ENCODE measurements at regions of chr12 and their contacts with region 1.

Region 1: DNA sequence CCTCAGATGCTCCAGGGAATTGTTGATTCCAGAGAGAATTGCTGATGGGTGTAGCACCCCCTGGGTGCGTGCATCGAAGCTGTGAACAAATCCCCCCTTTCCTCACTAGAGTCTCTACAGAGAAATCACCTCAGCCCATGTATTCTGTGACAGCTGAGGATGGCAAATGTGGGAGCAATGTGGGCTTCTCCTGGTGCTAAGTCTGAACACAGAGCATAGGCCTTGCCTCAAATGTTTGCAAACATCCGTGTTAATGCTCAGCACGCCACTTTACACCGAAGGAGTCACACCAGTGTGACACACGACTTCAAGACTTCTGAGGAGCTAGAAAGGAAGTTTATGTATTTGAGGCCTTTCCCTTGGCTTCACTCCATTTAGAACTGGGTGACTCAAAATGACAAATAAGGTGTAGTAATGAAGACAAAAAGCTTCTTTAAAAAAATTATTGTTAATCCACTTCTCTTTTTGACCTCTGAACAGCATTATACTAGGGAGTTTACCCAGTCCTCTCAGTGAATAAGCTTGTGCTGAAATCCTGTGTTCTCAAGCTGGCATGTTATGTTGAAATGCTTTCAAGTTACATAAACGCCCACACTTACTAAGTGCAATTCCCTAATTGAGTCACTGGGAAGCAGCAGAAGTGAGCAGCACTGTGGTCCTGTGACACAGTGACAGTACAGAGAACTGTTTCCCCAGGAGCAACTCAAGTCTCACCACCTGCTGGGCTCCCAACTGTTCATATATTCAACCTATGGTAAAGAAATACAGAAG is 92.9 kb downstream of the FAR2 start:
- DNase-seq: peak; percentile 54
- H3K4me3 Mint-ChIP-seq: no peak overlapping the region
- H3K27ac Mint-ChIP-seq: no peak overlapping the region
- H3K4me1 Mint-ChIP-seq: peaks cover 16% of the 10 kb centered on the region
- H3K27me3 Mint-ChIP-seq: no peaks in the 10 kb centered on the region

Region 2: GRCh38 chr12:28177461-28177860 is 1064.5 kb before region 1 on chr12:
- CTCF ChIA-PET with region 1: no interaction called
- intact Hi-C with region 1: no loop called
- DNase-seq: no peak
- H3K4me3 Mint-ChIP-seq: no peak overlapping the region
- H3K27ac Mint-ChIP-seq: no peak overlapping the region
- H3K4me1 Mint-ChIP-seq: no peaks in the 10 kb centered on the region
- H3K27me3 Mint-ChIP-seq: no peaks in the 10 kb centered on the region

Region 3: GRCh38 chr12:29088611-29089219 is 153.3 kb before region 1 on chr12:
- CTCF ChIA-PET with region 1: no interaction called
- intact Hi-C with region 1: loop called (anchors 5 kb)
- DNase-seq: no peak
- H3K4me3 Mint-ChIP-seq: no peak overlapping the region
- H3K27ac Mint-ChIP-seq: no peak overlapping the region
- H3K4me1 Mint-ChIP-seq: no peaks in the 10 kb centered on the region
- H3K27me3 Mint-ChIP-seq: peaks cover 7% of the 10 kb centered on the region

Region 4: DNA sequence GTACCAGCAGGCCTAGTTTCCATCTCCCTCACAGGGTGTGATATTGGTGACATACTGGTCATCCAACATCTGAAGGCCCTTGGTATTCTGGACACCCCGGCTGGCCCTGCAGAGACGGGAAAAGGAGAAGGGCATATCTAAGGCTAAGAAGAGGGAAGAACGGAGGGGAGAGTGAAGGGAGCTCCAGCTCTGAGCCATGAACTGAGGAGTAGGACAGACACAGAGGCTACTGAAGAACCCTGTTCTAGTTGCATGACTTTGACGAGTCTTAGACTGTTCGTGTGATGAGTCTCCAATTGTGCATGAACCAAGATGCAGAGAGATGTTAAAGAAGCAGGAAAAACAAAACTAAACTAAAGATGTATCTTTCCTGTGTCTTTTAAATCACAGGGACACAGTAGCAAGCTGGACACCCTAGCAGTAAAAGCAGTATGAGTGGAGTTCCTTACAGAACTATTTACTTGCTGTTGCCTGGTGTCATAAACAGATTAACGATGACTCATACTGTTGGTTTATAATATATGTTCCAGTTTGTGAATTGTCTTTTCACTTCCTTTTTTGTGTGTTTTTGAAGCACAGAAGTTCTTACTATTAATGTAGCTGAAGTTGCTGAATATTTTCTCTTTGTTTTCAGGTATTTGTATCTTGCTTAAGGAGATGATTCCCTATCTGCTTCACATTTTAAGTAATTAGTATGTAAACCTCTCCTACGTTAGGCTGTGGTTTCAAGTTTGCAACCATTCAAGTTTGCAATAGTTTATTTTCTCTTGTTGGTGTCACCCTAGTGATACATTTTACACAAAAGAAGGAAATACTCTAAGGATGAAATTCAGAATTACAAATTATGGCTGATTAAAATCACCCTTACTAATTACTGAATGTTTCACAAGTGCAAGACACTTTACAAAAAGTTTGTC is 77.3 kb before region 1 on chr12:
- CTCF ChIA-PET with region 1: no interaction called
- intact Hi-C with region 1: loop called (anchors 5 kb)
- DNase-seq: no peak
- H3K4me3 Mint-ChIP-seq: no peak overlapping the region
- H3K27ac Mint-ChIP-seq: no peak overlapping the region
- H3K4me1 Mint-ChIP-seq: peaks cover 13% of the 10 kb centered on the region
- H3K27me3 Mint-ChIP-seq: no peaks in the 10 kb centered on the region